Naive thymus-derived CD8-positive, alpha-beta T cell (primary cell): ENCODE measurements at regions of chr11 and their contacts with region 1.

Region 1: GRCh38 chr11:535519-536454 is at the start of gene HRAS:
- DNase-seq: peak; percentile 90 to 98 (median 96)
- ATAC-seq: peak; percentile 72 to 79
- H3K4me3 Mint-ChIP-seq: peak within 1 kb of the TSS; percentile 85 to 97 (median 96)
- H3K27ac Mint-ChIP-seq: peak within 1 kb of the TSS; percentile 89 to 99 (median 98)
- H3K4me1 Mint-ChIP-seq: peaks cover 2 to 25% (median 18%) of the 10 kb centered on the region in 4 donors
- H3K27me3 Mint-ChIP-seq: no peaks in the 10 kb centered on the region
- polyA plus RNA-seq, gene HRAS: 8.6 to 26.7 (median 15.3) TPM

Region 2: GRCh38 chr11:506238-506994 is 29.4 kb before region 1 on chr11:
- POLR2A ChIA-PET with region 1: interaction called, 42 read pairs
- DNase-seq: peak; percentile 92 to 98 (median 96)
- ATAC-seq: peak; percentile 75 to 76
- H3K4me3 Mint-ChIP-seq: peak overlapping the region; percentile 95 to 99 (median 98)
- H3K27ac Mint-ChIP-seq: peak overlapping the region; percentile 97 to 100 (median 100)
- H3K4me1 Mint-ChIP-seq: peaks cover 8 to 40% (median 25%) of the 10 kb centered on the region in 4 donors
- H3K27me3 Mint-ChIP-seq: no peaks in the 10 kb centered on the region